ENCODE measurements at regions of chr1 and their contacts with region 1.

Region 1: GRCh38 chr1:177948336-177948972 is 21.4 kb downstream of the SEC16B start:
- DNase-seq: peak; percentile 64 to 66
- ATAC-seq: peak; percentile 61 to 86; a peak in 5 of 6 replicates
- H3K4me3 ChIP-seq: no peak overlapping the region
- H3K27ac ChIP-seq: no peak overlapping the region
- H3K4me1 ChIP-seq: no peaks in the 10 kb centered on the region
- CTCF ChIP-seq: peak; percentile 83
- EP300 ChIP-seq: no peak
- POLR2A ChIP-seq: no peak
- RAD21 ChIP-seq: peak; percentile 70 to 72

Region 2: DNA sequence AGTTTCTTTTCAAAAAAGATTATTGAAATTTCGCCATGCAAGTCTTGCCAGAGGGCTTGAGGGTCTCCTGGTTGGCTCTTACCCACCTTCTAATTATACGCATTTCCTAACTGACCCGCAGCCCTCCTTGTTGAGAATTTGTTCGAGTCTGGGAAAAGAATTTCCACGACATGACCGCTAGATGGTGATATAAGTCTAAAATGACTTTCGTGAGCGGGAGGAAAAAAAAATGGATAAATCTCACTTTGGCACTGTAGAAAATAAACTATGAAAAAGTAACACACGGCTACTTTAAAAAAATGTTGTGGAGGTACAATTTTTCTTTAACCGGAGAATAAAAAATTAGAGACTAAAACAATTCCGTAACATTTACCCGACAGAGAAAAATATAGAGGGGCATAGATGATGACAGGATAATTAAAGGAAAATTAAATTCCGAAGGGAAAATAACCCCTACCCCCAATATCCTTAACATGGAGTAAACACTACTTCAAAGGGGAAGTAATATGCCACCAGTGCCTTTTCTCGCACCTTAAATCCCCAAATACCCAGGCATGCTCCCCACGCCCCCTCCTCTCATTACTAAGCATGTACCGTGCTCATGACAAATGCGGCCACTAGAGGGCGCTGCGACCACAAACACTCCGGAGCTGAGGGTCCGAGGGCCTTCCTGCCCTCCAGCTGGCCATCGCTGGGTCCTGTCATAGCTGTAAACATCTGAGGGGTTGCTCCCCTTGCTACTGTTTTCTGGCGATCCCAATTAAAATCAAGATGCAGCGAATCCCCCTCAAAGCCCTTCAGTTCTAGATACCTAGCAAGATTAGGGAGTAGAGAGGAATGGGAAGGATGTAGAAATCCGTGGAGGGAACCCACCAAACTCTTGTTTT is 1050.9 kb before region 1 on chr1:
- CTCF ChIA-PET with region 1: interaction called, 68 read pairs
- POLR2A ChIA-PET with region 1: no interaction called
- DNase-seq: peak; percentile 52 to 80
- ATAC-seq: peak; percentile 73 to 92; a peak in 5 of 6 replicates
- H3K4me3 ChIP-seq: peak overlapping the region; percentile 8; the same call in 2 of the 3 replicates
- H3K27ac ChIP-seq: no peak overlapping the region
- H3K4me1 ChIP-seq: no peaks in the 10 kb centered on the region
- CTCF ChIP-seq: peak; percentile 68
- EP300 ChIP-seq: no peak
- POLR2A ChIP-seq: no peak
- RAD21 ChIP-seq: peak; percentile 74 to 79

Region 3: DNA sequence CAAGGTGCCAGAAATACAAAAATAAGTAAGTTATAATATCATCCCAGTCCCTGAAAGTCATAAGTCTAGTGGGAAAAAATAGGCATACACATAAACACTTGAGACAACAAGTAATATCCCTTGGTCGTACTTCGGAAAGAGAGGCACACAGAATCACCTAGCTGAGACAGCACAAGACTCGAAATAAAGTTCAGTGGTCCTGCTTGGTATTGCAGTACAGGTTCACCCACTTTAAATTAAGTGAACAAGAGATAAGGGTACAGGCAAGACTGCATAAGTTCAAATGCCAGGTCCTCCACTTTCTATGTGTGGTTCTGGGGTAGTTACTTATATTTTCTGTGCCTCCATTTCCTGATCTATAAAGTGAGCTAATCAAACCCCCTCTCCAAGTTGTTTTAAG is 26.2 kb before region 1 on chr1:
- CTCF ChIA-PET with region 1: interaction called, 29 read pairs
- POLR2A ChIA-PET with region 1: no interaction called
- DNase-seq: no peak
- ATAC-seq: peak; percentile 77 to 85; a peak in 5 of 6 replicates
- H3K4me3 ChIP-seq: no peak overlapping the region
- H3K27ac ChIP-seq: no peak overlapping the region
- H3K4me1 ChIP-seq: peaks cover 6% of the 10 kb centered on the region; the same call in 1 of the 3 replicates
- CTCF ChIP-seq: no peak
- EP300 ChIP-seq: no peak
- POLR2A ChIP-seq: no peak
- RAD21 ChIP-seq: no peak

Region 4: GRCh38 chr1:177928194-177928593 is 20.3 kb before region 1 on chr1:
- CTCF ChIA-PET with region 1: interaction called, 79 read pairs
- POLR2A ChIA-PET with region 1: no interaction called
- DNase-seq: no peak
- ATAC-seq: no peak
- H3K4me3 ChIP-seq: no peak overlapping the region
- H3K27ac ChIP-seq: no peak overlapping the region
- H3K4me1 ChIP-seq: peaks cover 9% of the 10 kb centered on the region; the same call in 1 of the 3 replicates
- CTCF ChIP-seq: no peak
- EP300 ChIP-seq: no peak
- POLR2A ChIP-seq: no peak
- RAD21 ChIP-seq: no peak

Region 5: GRCh38 chr1:177959811-177960515 is 11.5 kb after region 1 on chr1:
- CTCF ChIA-PET with region 1: interaction called, 33 read pairs
- POLR2A ChIA-PET with region 1: no interaction called
- DNase-seq: peak; percentile 29 to 50
- ATAC-seq: peak; percentile 94 to 96
- H3K4me3 ChIP-seq: no peak overlapping the region
- H3K27ac ChIP-seq: no peak overlapping the region; a peak in 1 of 6 replicates
- H3K4me1 ChIP-seq: peaks cover 5% of the 10 kb centered on the region; the same call in 2 of the 3 replicates
- CTCF ChIP-seq: peak; percentile 64
- EP300 ChIP-seq: no peak
- POLR2A ChIP-seq: no peak
- RAD21 ChIP-seq: peak; percentile 75

Region 6: DNA sequence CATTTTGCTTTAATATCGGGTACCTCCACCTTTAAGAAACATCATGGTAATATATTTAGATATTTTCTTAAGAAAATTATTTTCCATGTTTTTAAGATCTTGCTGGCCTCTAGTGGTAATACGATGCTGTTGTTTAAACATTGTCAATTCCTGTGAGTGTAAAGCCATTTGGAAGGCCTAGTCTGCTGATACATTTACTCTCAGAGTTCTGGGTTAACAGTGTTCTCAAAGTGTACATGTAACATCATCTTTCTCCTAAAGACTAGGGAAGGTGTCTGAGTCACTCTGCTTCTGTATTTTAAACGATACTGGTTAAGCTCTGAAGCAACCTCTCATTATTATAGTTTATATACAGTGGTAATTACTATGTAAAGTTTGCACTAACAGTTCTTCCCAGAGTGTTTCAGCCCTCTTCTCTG is 334.5 kb after region 1 on chr1:
- CTCF ChIA-PET with region 1: interaction called, 13 read pairs
- POLR2A ChIA-PET with region 1: no interaction called
- DNase-seq: peak; percentile 40 to 71
- ATAC-seq: peak; percentile 82 to 86; a peak in 5 of 6 replicates
- H3K4me3 ChIP-seq: no peak overlapping the region
- H3K27ac ChIP-seq: no peak overlapping the region
- H3K4me1 ChIP-seq: peaks cover 13% of the 10 kb centered on the region; the same call in 2 of the 3 replicates
- CTCF ChIP-seq: peak; percentile 86
- EP300 ChIP-seq: no peak
- POLR2A ChIP-seq: no peak
- RAD21 ChIP-seq: peak; percentile 78 to 89

Measured in A549 (cell line).